SK-N-SH (cell line): ENCODE measurements at regions of chr5 and their contacts with region 1.

Region 1: DNA sequence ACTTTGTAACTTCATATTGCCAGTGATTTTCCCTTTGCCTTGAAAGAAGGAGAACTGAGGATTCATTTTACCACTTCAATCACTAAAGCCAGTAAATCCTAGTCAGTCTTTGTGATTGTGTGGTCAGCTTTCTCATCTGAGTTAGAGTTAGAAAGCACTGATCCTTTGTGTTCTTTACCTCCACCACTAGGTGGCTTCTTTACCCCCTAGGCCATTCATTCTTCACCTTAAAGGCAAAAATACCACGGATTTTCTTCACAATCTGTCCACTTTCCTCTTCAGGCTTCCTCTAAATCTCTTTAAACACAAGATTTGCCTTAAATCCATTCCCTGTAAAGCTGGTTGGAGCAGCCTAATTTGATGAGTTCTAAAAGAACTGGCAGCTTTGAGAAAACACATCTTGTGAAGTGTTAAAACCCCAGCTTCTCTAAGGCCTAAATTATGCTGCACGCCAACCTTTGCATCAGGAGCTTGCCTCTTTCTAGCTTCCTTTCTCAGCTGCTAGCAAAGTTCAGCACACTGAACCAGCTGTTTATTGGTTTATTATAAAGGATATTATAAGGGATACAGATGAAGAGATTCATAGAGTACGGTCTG is 20.4 kb downstream of the BDP1 start:
- DNase-seq: peak; percentile 57
- H3K4me3 ChIP-seq: no peak overlapping the region; a peak in 1 of 4 replicates
- H3K27ac ChIP-seq: peak overlapping the region in 1 of 2 experiments; percentile 23; a peak in 1 of 4 replicates
- H3K4me1 ChIP-seq: peaks cover 0 to 7% of the 10 kb centered on the region in 2 experiments; a peak in 1 of 4 replicates
- H3K27me3 ChIP-seq: no peaks in the 10 kb centered on the region
- CTCF ChIP-seq: peak; percentile 83
- EP300 ChIP-seq: no peak
- RAD21 ChIP-seq: peak; percentile 47

Region 2: DNA sequence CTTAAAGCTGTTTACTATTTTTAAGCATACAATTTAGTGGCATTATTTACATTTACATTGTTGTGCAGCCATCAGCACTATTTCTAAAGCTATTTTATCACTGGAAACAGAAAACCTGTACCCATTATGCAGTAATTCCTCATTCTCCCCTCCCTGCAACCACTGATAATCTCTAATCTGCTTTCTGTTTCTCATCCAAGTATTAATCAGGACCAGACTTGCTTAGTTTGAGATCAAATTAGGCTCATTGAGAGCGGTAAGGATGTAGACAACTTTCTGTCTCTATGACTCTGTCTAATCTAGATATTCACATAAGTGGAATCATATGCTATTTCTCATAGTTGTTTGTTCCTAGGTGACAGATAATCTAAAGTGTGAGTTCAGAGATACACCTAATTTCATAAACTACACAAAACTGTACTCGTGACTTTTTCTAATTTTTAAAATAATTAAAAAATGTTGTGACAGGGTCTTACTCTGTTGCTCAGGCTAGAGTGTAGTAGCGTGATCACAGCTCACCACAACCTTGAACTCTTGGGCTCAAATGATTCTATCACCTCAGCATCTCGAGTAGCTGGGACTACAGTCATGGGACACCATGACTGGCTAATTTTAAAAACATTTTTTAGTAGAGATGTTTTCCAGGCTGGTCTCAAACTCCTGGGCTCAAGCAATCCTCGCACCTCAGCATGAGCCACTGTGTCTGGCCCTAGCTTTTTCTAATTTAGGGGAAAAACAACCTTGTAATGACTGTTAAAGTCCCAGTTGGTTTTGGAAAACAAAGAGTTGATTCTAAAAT is 17.1 kb after region 1 on chr5:
- CTCF ChIA-PET with region 1: interaction called, 25 read pairs
- POLR2A ChIA-PET with region 1: no interaction called
- DNase-seq: peak; percentile 63
- H3K4me3 ChIP-seq: no peak overlapping the region
- H3K27ac ChIP-seq: peak overlapping the region in 1 of 2 experiments; percentile 41; a peak in 1 of 4 replicates
- H3K4me1 ChIP-seq: no peaks in the 10 kb centered on the region; a peak in 2 of 4 replicates
- H3K27me3 ChIP-seq: no peaks in the 10 kb centered on the region
- CTCF ChIP-seq: no peak
- EP300 ChIP-seq: peak in 1 of 2 experiments; percentile 81; a peak in 1 of 4 replicates
- RAD21 ChIP-seq: no peak